Caco-2 (cell line): ENCODE measurements at regions of chr14 and their contacts with region 1.

Region 1: GRCh38 chr14:80850197-80850814 is 91.2 kb downstream of the CEP128 start:
- DNase-seq: peak in 1 of 2 experiments; percentile 16
- H3K4me3 ChIP-seq: no peak overlapping the region
- H3K4me3 Mint-ChIP-seq: no peak overlapping the region
- H3K27ac Mint-ChIP-seq: no peak overlapping the region
- H3K4me1 ChIP-seq: no peaks in the 10 kb centered on the region
- H3K4me1 Mint-ChIP-seq: peaks cover 5% of the 10 kb centered on the region
- H3K27me3 ChIP-seq: no peaks in the 10 kb centered on the region
- H3K27me3 Mint-ChIP-seq: no peaks in the 10 kb centered on the region
- CTCF ChIP-seq: peak; percentile 24 to 54

Region 2: GRCh38 chr14:78967110-78967809 is 1883.0 kb before region 1 on chr14:
- CTCF ChIA-PET with region 1: no interaction called
- POLR2A ChIA-PET with region 1: no interaction called
- intact Hi-C with region 1: loop called (anchors 5 kb)
- DNase-seq: no peak
- H3K4me3 ChIP-seq: no peak overlapping the region
- H3K4me3 Mint-ChIP-seq: no peak overlapping the region
- H3K27ac Mint-ChIP-seq: no peak overlapping the region
- H3K4me1 ChIP-seq: no peaks in the 10 kb centered on the region
- H3K4me1 Mint-ChIP-seq: no peaks in the 10 kb centered on the region
- H3K27me3 ChIP-seq: no peaks in the 10 kb centered on the region
- H3K27me3 Mint-ChIP-seq: peaks cover 13% of the 10 kb centered on the region
- CTCF ChIP-seq: no peak

Region 3: GRCh38 chr14:80213599-80213998 is 636.7 kb before region 1 on chr14:
- CTCF ChIA-PET with region 1: no interaction called
- POLR2A ChIA-PET with region 1: no interaction called
- intact Hi-C with region 1: loop called (anchors 1 kb)
- DNase-seq: peak; percentile 68 to 72
- H3K4me3 ChIP-seq: no peak overlapping the region
- H3K4me3 Mint-ChIP-seq: no peak overlapping the region
- H3K27ac Mint-ChIP-seq: no peak overlapping the region
- H3K4me1 ChIP-seq: peaks cover 21% of the 10 kb centered on the region
- H3K4me1 Mint-ChIP-seq: peaks cover 7% of the 10 kb centered on the region
- H3K27me3 ChIP-seq: no peaks in the 10 kb centered on the region
- H3K27me3 Mint-ChIP-seq: peaks cover 3% of the 10 kb centered on the region
- CTCF ChIP-seq: peak; percentile 45 to 52

Region 4: GRCh38 chr14:80364274-80364673 is 486.0 kb before region 1 on chr14:
- CTCF ChIA-PET with region 1: no interaction called
- POLR2A ChIA-PET with region 1: no interaction called
- intact Hi-C with region 1: loop called (anchors 1 kb)
- DNase-seq: peak in 1 of 2 experiments; percentile 4
- H3K4me3 ChIP-seq: no peak overlapping the region
- H3K4me3 Mint-ChIP-seq: no peak overlapping the region
- H3K27ac Mint-ChIP-seq: no peak overlapping the region
- H3K4me1 ChIP-seq: peaks cover 12% of the 10 kb centered on the region
- H3K4me1 Mint-ChIP-seq: peaks cover 7% of the 10 kb centered on the region
- H3K27me3 ChIP-seq: no peaks in the 10 kb centered on the region
- H3K27me3 Mint-ChIP-seq: no peaks in the 10 kb centered on the region
- CTCF ChIP-seq: peak in 1 of 2 experiments; percentile 11

Region 5: GRCh38 chr14:80575763-80576162 is 274.5 kb before region 1 on chr14:
- CTCF ChIA-PET with region 1: no interaction called
- POLR2A ChIA-PET with region 1: no interaction called
- intact Hi-C with region 1: no loop called
- DNase-seq: no peak
- H3K4me3 ChIP-seq: no peak overlapping the region
- H3K4me3 Mint-ChIP-seq: no peak overlapping the region
- H3K27ac Mint-ChIP-seq: no peak overlapping the region
- H3K4me1 ChIP-seq: peaks cover 33% of the 10 kb centered on the region
- H3K4me1 Mint-ChIP-seq: peaks cover 18% of the 10 kb centered on the region
- H3K27me3 ChIP-seq: no peaks in the 10 kb centered on the region
- H3K27me3 Mint-ChIP-seq: no peaks in the 10 kb centered on the region
- CTCF ChIP-seq: no peak

Region 6: GRCh38 chr14:80587075-80587724 is 263.1 kb before region 1 on chr14:
- CTCF ChIA-PET with region 1: no interaction called
- POLR2A ChIA-PET with region 1: no interaction called
- intact Hi-C with region 1: loop called (anchors 5 kb)
- DNase-seq: no peak
- H3K4me3 ChIP-seq: no peak overlapping the region
- H3K4me3 Mint-ChIP-seq: no peak overlapping the region
- H3K27ac Mint-ChIP-seq: no peak overlapping the region
- H3K4me1 ChIP-seq: peaks cover 15% of the 10 kb centered on the region
- H3K4me1 Mint-ChIP-seq: peaks cover 12% of the 10 kb centered on the region
- H3K27me3 ChIP-seq: no peaks in the 10 kb centered on the region
- H3K27me3 Mint-ChIP-seq: no peaks in the 10 kb centered on the region
- CTCF ChIP-seq: peak; percentile 21 to 46